ENCODE measurements at regions of chr7 and their contacts with region 1.

Region 1: GRCh38 chr7:139431010-139431409 is 52.5 kb downstream of the KLRG2 start:
- DNase-seq: no peak
- ATAC-seq: no peak
- H3K4me3 Mint-ChIP-seq: no peak overlapping the region
- H3K27ac Mint-ChIP-seq: no peak overlapping the region
- H3K4me1 Mint-ChIP-seq: peaks cover 7% of the 10 kb centered on the region
- H3K27me3 Mint-ChIP-seq: no peaks in the 10 kb centered on the region

Region 2: GRCh38 chr7:138797841-138798271 is 633.2 kb before region 1 on chr7 and contains the starts of genes ATP6V0A4 and TMEM213:
- CTCF ChIA-PET with region 1: no interaction called
- POLR2A ChIA-PET with region 1: no interaction called
- intact Hi-C with region 1: no loop called
- DNase-seq: no peak
- ATAC-seq: no peak
- H3K4me3 Mint-ChIP-seq: no peak within 1 kb of the TSS
- H3K27ac Mint-ChIP-seq: no peak within 1 kb of the TSS
- H3K4me1 Mint-ChIP-seq: peaks cover 2% of the 10 kb centered on the region
- H3K27me3 Mint-ChIP-seq: peaks cover 2% of the 10 kb centered on the region
- total RNA-seq, gene ATP6V0A4: 0.19 to 0.32 TPM
- total RNA-seq, gene TMEM213: not detected

Region 3: GRCh38 chr7:139192014-139192706 is 238.8 kb before region 1 on chr7:
- CTCF ChIA-PET with region 1: no interaction called
- POLR2A ChIA-PET with region 1: no interaction called
- intact Hi-C with region 1: no loop called
- DNase-seq: no peak
- ATAC-seq: no peak
- H3K4me3 Mint-ChIP-seq: no peak overlapping the region
- H3K27ac Mint-ChIP-seq: no peak overlapping the region
- H3K4me1 Mint-ChIP-seq: no peaks in the 10 kb centered on the region
- H3K27me3 Mint-ChIP-seq: no peaks in the 10 kb centered on the region

Region 4: DNA sequence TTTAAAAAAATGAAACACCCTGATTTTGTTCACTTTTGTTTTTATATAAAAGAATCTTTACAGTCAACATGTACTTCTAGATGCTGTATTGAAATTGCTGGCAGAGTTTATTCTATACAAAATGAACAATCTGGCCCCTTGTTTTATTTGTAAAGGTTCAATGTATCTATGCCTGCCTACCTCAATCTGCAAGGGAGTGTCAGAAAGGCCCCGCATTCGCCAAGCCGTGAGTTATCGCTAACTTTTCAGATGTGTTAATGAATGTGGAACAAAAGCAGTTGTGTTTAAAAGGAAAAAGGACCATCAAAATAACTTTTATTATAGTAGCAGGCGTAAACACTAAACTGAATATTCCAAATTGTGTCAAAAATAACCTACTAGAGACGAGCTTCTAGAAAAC is 56.8 kb before region 1 on chr7:
- CTCF ChIA-PET with region 1: interaction called, 10 read pairs
- POLR2A ChIA-PET with region 1: no interaction called
- intact Hi-C with region 1: no loop called
- DNase-seq: no peak
- ATAC-seq: no peak
- H3K4me3 Mint-ChIP-seq: no peak overlapping the region
- H3K27ac Mint-ChIP-seq: no peak overlapping the region
- H3K4me1 Mint-ChIP-seq: peaks cover 55% of the 10 kb centered on the region
- H3K27me3 Mint-ChIP-seq: no peaks in the 10 kb centered on the region

Region 5: DNA sequence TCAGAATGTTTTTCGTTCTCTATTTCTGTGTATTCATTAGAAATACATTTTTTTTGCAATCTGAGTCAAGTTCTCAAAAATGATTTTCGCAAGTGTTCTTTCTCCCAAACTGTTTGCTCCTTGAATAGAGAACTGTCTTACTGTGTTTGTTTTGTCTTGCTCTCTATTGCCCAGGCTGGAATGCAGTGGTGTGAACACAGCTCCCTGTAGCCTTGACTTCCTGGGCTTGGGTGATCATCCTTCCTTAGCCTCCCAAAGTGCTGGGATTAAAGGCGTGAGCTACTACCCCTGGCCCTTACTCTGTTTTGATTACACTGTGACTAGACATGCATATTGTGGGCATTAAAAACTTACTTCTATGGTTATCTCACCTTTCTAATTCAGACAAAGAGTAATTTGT is 14.6 kb before region 1 on chr7:
- CTCF ChIA-PET with region 1: interaction called, 46 read pairs
- POLR2A ChIA-PET with region 1: no interaction called
- intact Hi-C with region 1: no loop called
- DNase-seq: no peak
- ATAC-seq: no peak
- H3K4me3 Mint-ChIP-seq: no peak overlapping the region
- H3K27ac Mint-ChIP-seq: no peak overlapping the region
- H3K4me1 Mint-ChIP-seq: no peaks in the 10 kb centered on the region
- H3K27me3 Mint-ChIP-seq: no peaks in the 10 kb centered on the region

Region 6: GRCh38 chr7:139452958-139453672 is 22.1 kb after region 1 on chr7:
- CTCF ChIA-PET with region 1: interaction called, 25 read pairs
- POLR2A ChIA-PET with region 1: no interaction called
- intact Hi-C with region 1: no loop called
- DNase-seq: no peak
- ATAC-seq: no peak
- H3K4me3 Mint-ChIP-seq: no peak overlapping the region
- H3K27ac Mint-ChIP-seq: no peak overlapping the region
- H3K4me1 Mint-ChIP-seq: no peaks in the 10 kb centered on the region
- H3K27me3 Mint-ChIP-seq: no peaks in the 10 kb centered on the region

Region 7: DNA sequence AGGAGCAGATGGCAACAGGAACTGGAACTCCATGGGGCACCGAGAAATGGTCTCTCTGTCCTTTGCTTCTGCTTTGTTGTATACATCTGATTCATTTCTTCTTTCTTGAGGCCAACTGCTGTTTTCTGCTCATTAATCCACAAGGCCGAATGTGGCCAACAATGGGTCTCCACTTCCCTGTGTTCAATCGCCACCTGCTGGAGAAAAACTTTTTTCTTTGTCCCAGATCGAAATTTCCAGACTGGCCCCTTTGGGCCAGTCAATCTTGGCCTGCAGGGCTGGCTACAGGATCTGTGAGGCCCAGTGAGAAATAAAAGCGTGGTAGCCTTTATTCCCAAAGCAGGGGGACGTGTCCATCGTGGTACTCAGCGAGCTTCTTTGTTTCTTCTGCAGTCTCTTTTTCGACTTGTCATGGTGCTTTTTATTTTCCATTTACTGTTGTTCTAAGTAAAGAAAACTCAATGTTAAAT is 572.9 kb after region 1 on chr7:
- CTCF ChIA-PET with region 1: no interaction called
- POLR2A ChIA-PET with region 1: no interaction called
- intact Hi-C with region 1: loop called in 1 of 2 experiments (anchors 5 kb)
- DNase-seq: peak; percentile 53
- ATAC-seq: peak; percentile 16
- H3K4me3 Mint-ChIP-seq: no peak overlapping the region
- H3K27ac Mint-ChIP-seq: no peak overlapping the region
- H3K4me1 Mint-ChIP-seq: no peaks in the 10 kb centered on the region
- H3K27me3 Mint-ChIP-seq: no peaks in the 10 kb centered on the region

Measured in activated CD4-positive, alpha-beta T cell treated with anti-CD3 and anti-CD28 coated beads for 36 hours (primary cell).